Endothelial cell of umbilical vein (primary cell): ENCODE measurements at regions of chr19 and their contacts with region 1.

Region 1: GRCh38 chr19:2610637-2611482 is 91.6 kb downstream of the GNG7 start:
- DNase-seq: peak; percentile 85
- H3K4me3 ChIP-seq: peak overlapping the region in 1 of 3 experiments; percentile 9
- H3K27ac ChIP-seq: peak overlapping the region; percentile 62
- H3K4me1 ChIP-seq: peaks cover under 1% of the 10 kb centered on the region
- H3K27me3 ChIP-seq: no peaks in the 10 kb centered on the region
- CTCF ChIP-seq: peak; percentile 96 to 98
- POLR2A ChIP-seq: no peak

Region 2: GRCh38 chr19:2269244-2269947 is 341.5 kb before region 1 on chr19:
- CTCF ChIA-PET with region 1: interaction called, 3 read pairs
- POLR2A ChIA-PET with region 1: no interaction called
- dilution Hi-C with region 1: no loop called
- intact Hi-C with region 1: loop called (anchors 5 kb)
- DNase-seq: peak; percentile 95
- H3K4me3 ChIP-seq: peak overlapping the region; percentile 66 to 95 (median 92)
- H3K27ac ChIP-seq: peak overlapping the region; percentile 57
- H3K4me1 ChIP-seq: peaks cover 38% of the 10 kb centered on the region
- H3K27me3 ChIP-seq: no peaks in the 10 kb centered on the region
- CTCF ChIP-seq: no peak
- POLR2A ChIP-seq: peak; percentile 99

Region 3: DNA sequence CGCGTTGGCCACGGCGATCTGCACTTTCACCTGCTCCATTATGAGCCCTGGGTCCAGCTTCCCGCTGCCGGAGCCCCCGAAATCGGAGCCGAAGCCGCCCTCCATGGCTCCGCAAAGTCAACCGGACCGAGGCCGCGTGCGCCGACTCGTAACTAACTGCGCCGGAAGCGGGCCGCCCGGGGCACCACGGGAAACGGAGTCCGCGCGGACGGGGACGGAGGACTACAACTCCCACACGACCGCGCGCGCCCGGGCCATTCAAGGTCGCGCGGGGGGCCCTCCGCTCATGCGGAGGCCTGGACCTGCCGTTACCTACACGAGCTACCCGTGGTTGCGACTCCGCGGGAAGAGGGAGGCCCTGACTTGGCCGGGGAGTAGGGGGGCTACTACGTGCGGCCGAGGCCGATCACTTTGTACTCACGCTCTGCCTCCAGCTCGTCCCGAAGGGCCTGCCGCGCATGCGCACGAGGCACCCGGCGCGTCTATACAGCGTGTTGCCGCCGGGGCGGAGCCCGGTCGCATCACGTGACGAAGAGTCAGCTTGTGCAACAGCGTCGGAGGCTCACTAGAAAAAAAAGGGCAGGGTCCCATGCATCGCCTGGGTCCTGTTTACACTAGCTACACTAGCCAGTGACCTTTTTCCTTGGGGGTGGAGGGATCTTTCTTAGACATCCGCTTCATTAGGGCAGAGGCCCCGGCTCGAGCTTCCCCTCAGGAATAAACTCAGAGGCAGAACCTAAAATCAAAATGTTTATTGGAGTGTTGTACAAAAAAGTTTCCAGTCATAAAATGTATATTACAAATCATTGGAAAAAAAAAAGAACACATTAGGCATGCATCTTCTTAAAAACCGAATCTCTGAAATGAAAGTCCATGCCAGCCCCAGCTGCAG is 183.2 kb before region 1 on chr19 and contains the start of gene TIMM13:
- CTCF ChIA-PET with region 1: interaction called, 33 read pairs
- POLR2A ChIA-PET with region 1: interaction called, 3 read pairs
- dilution Hi-C with region 1: no loop called
- intact Hi-C with region 1: loop called (anchors 1 kb)
- DNase-seq: peak; percentile 98
- H3K4me3 ChIP-seq: peak within 1 kb of the TSS; percentile 63 to 75 (median 63)
- H3K27ac ChIP-seq: peak within 1 kb of the TSS; percentile 84
- H3K4me1 ChIP-seq: peaks cover 26% of the 10 kb centered on the region
- H3K27me3 ChIP-seq: no peaks in the 10 kb centered on the region
- CTCF ChIP-seq: no peak
- POLR2A ChIP-seq: peak; percentile 49
- total RNA-seq, gene TIMM13: 148 and 160 TPM in 2 replicates

Region 4: GRCh38 chr19:2461751-2462634 is 148.9 kb before region 1 on chr19:
- CTCF ChIA-PET with region 1: interaction called, 27 read pairs
- POLR2A ChIA-PET with region 1: interaction called, 4 read pairs
- dilution Hi-C with region 1: no loop called
- intact Hi-C with region 1: no loop called
- DNase-seq: peak; percentile 71
- H3K4me3 ChIP-seq: peak overlapping the region; percentile 38 to 68 (median 60)
- H3K27ac ChIP-seq: peak overlapping the region; percentile 61
- H3K4me1 ChIP-seq: peaks cover 14% of the 10 kb centered on the region
- H3K27me3 ChIP-seq: no peaks in the 10 kb centered on the region
- CTCF ChIP-seq: peak in 1 of 2 donors; percentile 10
- POLR2A ChIP-seq: no peak

Region 5: GRCh38 chr19:2636897-2637683 is 26.2 kb after region 1 on chr19:
- CTCF ChIA-PET with region 1: interaction called, 171 read pairs
- POLR2A ChIA-PET with region 1: interaction called, 3 read pairs
- dilution Hi-C with region 1: no loop called
- intact Hi-C with region 1: loop called (anchors 2 kb)
- DNase-seq: peak; percentile 43
- H3K4me3 ChIP-seq: no peak overlapping the region
- H3K27ac ChIP-seq: no peak overlapping the region
- H3K4me1 ChIP-seq: no peaks in the 10 kb centered on the region
- H3K27me3 ChIP-seq: no peaks in the 10 kb centered on the region
- CTCF ChIP-seq: peak; percentile 75 to 93
- POLR2A ChIP-seq: no peak

Region 6: GRCh38 chr19:2648528-2648937 is 37.7 kb after region 1 on chr19:
- CTCF ChIA-PET with region 1: no interaction called
- POLR2A ChIA-PET with region 1: no interaction called
- dilution Hi-C with region 1: no loop called
- intact Hi-C with region 1: no loop called
- DNase-seq: peak; percentile 72
- H3K4me3 ChIP-seq: no peak overlapping the region
- H3K27ac ChIP-seq: no peak overlapping the region
- H3K4me1 ChIP-seq: no peaks in the 10 kb centered on the region
- H3K27me3 ChIP-seq: peaks cover 0 to 3% of the 10 kb centered on the region in 2 experiments
- CTCF ChIP-seq: peak; percentile 73 to 87
- POLR2A ChIP-seq: no peak

Region 7: DNA sequence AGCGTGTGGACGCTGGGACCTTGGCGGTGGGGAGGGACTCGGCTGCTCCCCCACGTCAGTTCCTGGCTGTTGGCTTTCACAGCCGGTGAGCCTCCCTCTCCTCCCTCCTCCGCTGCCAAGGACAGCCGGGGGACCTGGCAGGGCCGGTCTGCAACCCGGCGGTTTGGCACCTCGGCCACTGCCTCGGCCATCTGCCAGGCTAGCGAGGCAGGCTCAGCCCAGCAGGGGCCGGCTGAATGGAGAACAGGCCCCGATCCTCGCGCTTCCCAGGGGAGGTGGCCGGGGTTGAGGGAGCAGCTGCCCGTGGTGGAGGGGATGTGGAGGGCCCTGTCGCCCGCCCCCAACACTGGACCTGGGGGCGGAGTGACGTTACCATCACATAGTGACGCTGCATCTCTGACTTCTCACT is 446.4 kb after region 1 on chr19:
- CTCF ChIA-PET with region 1: no interaction called
- POLR2A ChIA-PET with region 1: no interaction called
- dilution Hi-C with region 1: no loop called
- intact Hi-C with region 1: no loop called
- DNase-seq: no peak
- H3K4me3 ChIP-seq: no peak overlapping the region
- H3K27ac ChIP-seq: no peak overlapping the region
- H3K4me1 ChIP-seq: peaks cover 3% of the 10 kb centered on the region
- H3K27me3 ChIP-seq: no peaks in the 10 kb centered on the region
- CTCF ChIP-seq: no peak
- POLR2A ChIP-seq: no peak